Vagina (tissue), 2 donors: ENCODE measurements at regions of chr11 and their contacts with region 1.

Region 1: GRCh38 chr11:3854977-3855807 is at the start of gene STIM1:
- DNase-seq: peak in 1 of 2 donors; percentile 94
- H3K4me3 ChIP-seq: peak within 1 kb of the TSS; percentile 98 to 99
- H3K27ac ChIP-seq: peak within 1 kb of the TSS; percentile 99
- H3K4me1 ChIP-seq: peaks cover 57% of the 10 kb centered on the region
- H3K27me3 ChIP-seq: no peaks in the 10 kb centered on the region
- CTCF ChIP-seq: peak; percentile 93 to 99 (median 99)
- POLR2A ChIP-seq: peak in 1 of 2 donors; percentile 54
- total RNA-seq, gene STIM1: 68.8 TPM

Region 2: GRCh38 chr11:3947061-3947460 is 91.9 kb after region 1 on chr11:
- intact Hi-C with region 1: loop called (anchors 10 kb)
- DNase-seq: peak in 1 of 2 donors; percentile 86
- H3K4me3 ChIP-seq: peak overlapping the region in 1 of 2 donors; percentile 14
- H3K27ac ChIP-seq: peak overlapping the region; percentile 85
- H3K4me1 ChIP-seq: peaks cover 99% of the 10 kb centered on the region
- H3K27me3 ChIP-seq: no peaks in the 10 kb centered on the region
- CTCF ChIP-seq: no peak
- POLR2A ChIP-seq: no peak

Region 3: GRCh38 chr11:4102711-4103110 is 247.5 kb after region 1 on chr11:
- intact Hi-C with region 1: no loop called
- DNase-seq: no peak
- H3K4me3 ChIP-seq: no peak overlapping the region
- H3K27ac ChIP-seq: no peak overlapping the region
- H3K4me1 ChIP-seq: peaks cover 6% of the 10 kb centered on the region
- H3K27me3 ChIP-seq: no peaks in the 10 kb centered on the region
- CTCF ChIP-seq: no peak
- POLR2A ChIP-seq: no peak